ENCODE measurements at regions of chr2 and their contacts with region 1.

Region 1: GRCh38 chr2:68185541-68186164 is 28.0 kb downstream of the PNO1 start:
- DNase-seq: peak; percentile 76
- ATAC-seq: peak; percentile 61
- H3K4me3 ChIP-seq: no peak overlapping the region
- H3K4me3 Mint-ChIP-seq: no peak overlapping the region
- H3K27ac ChIP-seq: no peak overlapping the region
- H3K27ac Mint-ChIP-seq: no peak overlapping the region
- H3K4me1 ChIP-seq: peaks cover 0 to 5% of the 10 kb centered on the region in 2 donors
- H3K4me1 Mint-ChIP-seq: peaks cover 24% of the 10 kb centered on the region
- H3K27me3 ChIP-seq: no peaks in the 10 kb centered on the region
- H3K27me3 Mint-ChIP-seq: no peaks in the 10 kb centered on the region
- CTCF ChIP-seq: peak; percentile 93

Region 2: GRCh38 chr2:68169297-68169696 is 16.4 kb before region 1 on chr2:
- CTCF ChIA-PET with region 1: interaction called, 13 read pairs
- POLR2A ChIA-PET with region 1: no interaction called
- intact Hi-C with region 1: no loop called
- DNase-seq: no peak
- ATAC-seq: no peak
- H3K4me3 ChIP-seq: no peak overlapping the region
- H3K4me3 Mint-ChIP-seq: no peak overlapping the region
- H3K27ac ChIP-seq: no peak overlapping the region
- H3K27ac Mint-ChIP-seq: no peak overlapping the region
- H3K4me1 ChIP-seq: peaks cover 12 to 14% of the 10 kb centered on the region in 2 donors
- H3K4me1 Mint-ChIP-seq: peaks cover 20% of the 10 kb centered on the region
- H3K27me3 ChIP-seq: no peaks in the 10 kb centered on the region
- H3K27me3 Mint-ChIP-seq: no peaks in the 10 kb centered on the region
- CTCF ChIP-seq: no peak

Region 3: GRCh38 chr2:68225119-68225632 is 39.5 kb after region 1 on chr2:
- CTCF ChIA-PET with region 1: interaction called, 10 read pairs
- POLR2A ChIA-PET with region 1: no interaction called
- intact Hi-C with region 1: no loop called
- DNase-seq: peak; percentile 45
- ATAC-seq: no peak
- H3K4me3 ChIP-seq: no peak overlapping the region
- H3K4me3 Mint-ChIP-seq: peak overlapping the region; percentile 5
- H3K27ac ChIP-seq: peak overlapping the region in 1 of 2 donors; percentile 58
- H3K27ac Mint-ChIP-seq: no peak overlapping the region
- H3K4me1 ChIP-seq: peaks cover 13 to 48% of the 10 kb centered on the region in 2 donors
- H3K4me1 Mint-ChIP-seq: peaks cover 86% of the 10 kb centered on the region
- H3K27me3 ChIP-seq: no peaks in the 10 kb centered on the region
- H3K27me3 Mint-ChIP-seq: no peaks in the 10 kb centered on the region
- CTCF ChIP-seq: no peak

Measured in B cell (primary cell).